ENCODE measurements at regions of chr6 and their contacts with region 1.

Region 1: GRCh38 chr6:107674995-107675738 is 148.9 kb downstream of the SCML4 start:
- DNase-seq: peak; percentile 76
- H3K4me3 ChIP-seq: no peak overlapping the region
- H3K27ac ChIP-seq: no peak overlapping the region
- H3K27me3 ChIP-seq: no peaks in the 10 kb centered on the region
- CTCF ChIP-seq: peak; percentile 93

Region 2: GRCh38 chr6:107691062-107691751 is 16.0 kb after region 1 on chr6:
- CTCF ChIA-PET with region 1: interaction called, 14 read pairs
- POLR2A ChIA-PET with region 1: interaction called, 5 read pairs
- DNase-seq: no peak
- H3K4me3 ChIP-seq: 0 out of 2 replicates have a peak overlapping the region, but pooled peaks have one; percentile 7
- H3K27ac ChIP-seq: peak overlapping the region; percentile 85
- H3K27me3 ChIP-seq: no peaks in the 10 kb centered on the region
- CTCF ChIP-seq: no peak

Region 3: DNA sequence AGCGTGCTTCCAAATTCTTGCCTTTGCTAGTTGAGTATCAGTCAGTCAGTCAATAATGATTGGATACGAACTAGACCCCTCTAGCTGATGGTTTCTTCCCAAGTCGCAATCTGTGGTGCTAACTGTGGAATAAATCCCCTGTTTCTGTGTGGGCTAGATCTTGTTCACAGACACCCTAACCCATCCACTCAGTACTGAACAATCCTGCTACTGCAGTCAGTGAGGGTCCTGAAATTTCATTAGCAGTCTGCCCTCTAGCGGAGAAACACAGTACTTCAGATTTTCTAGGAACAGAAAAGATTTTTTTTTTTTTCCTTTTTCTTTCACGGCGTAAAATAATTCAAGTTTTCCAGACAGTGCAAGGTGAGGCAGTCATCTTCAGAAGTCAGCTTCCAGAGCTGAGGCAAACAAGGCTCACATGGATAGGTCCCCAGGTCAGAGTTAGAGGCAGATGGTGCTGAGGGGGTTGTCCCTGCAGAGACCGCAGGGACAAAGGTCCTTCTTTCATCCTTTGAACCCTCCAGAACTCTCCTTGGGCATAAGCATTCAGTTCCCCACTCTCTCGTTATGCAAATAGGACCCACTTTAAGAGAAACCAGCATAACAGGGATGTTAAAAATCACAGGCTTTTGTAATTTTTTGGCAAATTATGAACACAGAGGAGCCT is 29.3 kb after region 1 on chr6:
- CTCF ChIA-PET with region 1: interaction called, 46 read pairs
- POLR2A ChIA-PET with region 1: no interaction called
- DNase-seq: no peak
- H3K4me3 ChIP-seq: no peak overlapping the region; the same call in 1 of the 2 replicates
- H3K27ac ChIP-seq: no peak overlapping the region
- H3K27me3 ChIP-seq: no peaks in the 10 kb centered on the region
- CTCF ChIP-seq: peak; percentile 82